ENCODE measurements at regions of chr20 and their contacts with region 1.

Region 1: GRCh38 chr20:63627129-63627750 is 339 bp upstream of the GMEB2 start:
- DNase-seq: peak; percentile 96 to 98
- ATAC-seq: peak; percentile 94
- H3K4me3 ChIP-seq: peak overlapping the region; percentile 16 to 69
- H3K27ac ChIP-seq: peak overlapping the region in 1 of 2 donors; percentile 17
- H3K4me1 ChIP-seq: no peaks in the 10 kb centered on the region
- H3K27me3 ChIP-seq: no peaks in the 10 kb centered on the region

Region 2: GRCh38 chr20:63520504-63520933 is 106.7 kb before region 1 on chr20 and contains the start of gene PPDPF:
- intact Hi-C with region 1: no loop called
- DNase-seq: peak; percentile 87 to 94
- ATAC-seq: peak; percentile 91
- H3K4me3 ChIP-seq: peak within 1 kb of the TSS; percentile 78 to 80
- H3K27ac ChIP-seq: peak within 1 kb of the TSS in 1 of 2 donors; percentile 55
- H3K4me1 ChIP-seq: no peaks in the 10 kb centered on the region
- H3K27me3 ChIP-seq: no peaks in the 10 kb centered on the region
- total RNA-seq, gene PPDPF: 176 to 190 TPM

Region 3: DNA sequence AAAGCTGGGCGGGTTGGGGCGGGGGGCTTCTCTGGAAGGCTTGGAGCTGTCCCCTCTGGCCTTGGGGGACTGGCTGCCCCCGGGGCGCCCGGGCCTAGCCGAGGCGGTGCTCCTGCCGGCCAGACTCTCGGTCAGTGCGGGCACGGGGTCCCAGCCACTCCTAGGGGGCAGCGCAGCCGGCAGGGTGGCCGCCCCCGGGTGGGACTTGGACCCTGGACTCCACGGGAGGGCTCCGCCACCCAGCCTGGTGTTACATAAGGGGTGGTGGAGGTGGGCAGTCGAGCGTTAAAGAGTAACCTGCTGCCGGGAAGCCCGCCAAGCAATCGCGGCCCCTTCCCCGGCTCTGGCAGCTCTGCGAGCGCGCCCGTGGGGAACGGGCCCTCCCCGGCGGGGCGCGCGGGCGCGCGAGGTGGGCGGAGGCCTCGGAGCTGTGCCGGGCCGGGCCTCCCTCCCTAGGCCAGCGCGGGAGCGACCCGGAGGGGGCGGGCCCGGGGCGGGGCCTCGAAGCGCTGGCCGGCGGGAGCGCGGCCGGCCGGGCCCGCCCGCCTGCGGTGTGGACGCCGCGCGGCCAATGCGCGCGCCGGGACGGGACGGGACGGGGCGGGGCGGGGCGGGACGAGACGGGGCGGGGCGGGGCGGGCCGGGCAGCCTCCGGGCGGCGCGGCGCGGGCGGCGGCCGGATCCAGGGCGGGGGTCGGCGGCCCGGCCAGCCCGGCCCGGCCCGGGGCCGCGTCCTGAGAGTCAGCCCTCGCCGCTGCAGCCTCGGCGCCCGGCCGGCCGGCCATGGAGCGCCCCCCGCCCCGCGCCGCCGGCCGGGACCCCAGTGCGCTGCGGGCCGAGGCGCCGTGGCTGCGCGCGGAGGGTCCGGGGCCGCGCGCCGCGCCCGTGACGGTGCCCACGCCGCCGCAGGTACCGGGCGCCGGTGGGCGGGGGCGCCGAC is 112.2 kb after region 1 on chr20 and contains the start of gene SLC2A4RG:
- intact Hi-C with region 1: loop called in 1 of 2 experiments (anchors 2 kb)
- DNase-seq: peak; percentile 87 to 93
- ATAC-seq: peak; percentile 74
- H3K4me3 ChIP-seq: peak within 1 kb of the TSS; percentile 73 to 77
- H3K27ac ChIP-seq: peak within 1 kb of the TSS; percentile 63 to 68
- H3K4me1 ChIP-seq: no peaks in the 10 kb centered on the region
- H3K27me3 ChIP-seq: no peaks in the 10 kb centered on the region
- total RNA-seq, gene SLC2A4RG: 49.9 to 72.4 TPM

Region 4: DNA sequence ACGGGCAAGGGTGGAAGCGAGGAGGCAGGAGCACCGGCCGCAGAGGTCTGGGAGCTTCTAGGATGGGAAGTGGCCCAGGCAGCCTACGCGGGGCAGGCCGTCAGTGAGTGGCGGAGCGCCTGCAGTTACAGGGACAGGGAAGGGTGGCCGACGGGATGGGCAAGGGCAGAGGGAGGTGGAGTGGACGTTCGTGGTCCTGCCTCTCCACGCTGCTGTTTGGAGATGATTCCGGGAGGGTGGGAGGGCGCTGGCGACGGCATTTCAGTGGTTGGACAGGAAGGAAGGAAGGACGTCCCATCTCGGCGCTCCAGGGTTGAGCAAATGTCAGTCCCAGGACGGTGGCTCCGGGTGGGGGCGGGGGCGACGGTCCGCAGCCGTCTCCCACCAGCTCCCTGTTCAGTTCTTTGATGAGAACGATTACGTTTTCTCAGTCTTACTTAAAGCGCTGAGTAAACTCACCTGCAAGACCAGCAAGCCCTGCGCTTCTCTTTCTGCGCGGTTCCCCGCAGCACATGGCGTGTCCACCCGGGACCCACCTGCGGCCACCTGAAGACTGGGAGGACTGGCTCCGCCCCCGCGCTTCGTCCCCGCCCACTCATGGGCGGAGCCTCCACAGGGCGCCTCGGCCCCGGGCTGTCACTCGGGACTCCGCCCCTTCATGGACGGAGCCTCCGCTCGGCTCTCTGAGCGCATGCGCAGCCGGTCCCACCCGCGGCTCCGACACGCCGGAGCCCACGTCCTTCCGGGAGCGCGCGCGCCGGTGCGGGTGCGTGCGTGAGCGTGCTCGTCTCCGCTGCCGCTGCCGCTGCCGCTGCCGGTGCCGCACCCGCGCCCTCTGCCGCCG is 267.3 kb after region 1 on chr20 and contains the start of gene DNAJC5:
- intact Hi-C with region 1: loop called in 1 of 2 experiments (anchors 10 kb)
- DNase-seq: peak; percentile 97 to 98
- ATAC-seq: peak; percentile 97
- H3K4me3 ChIP-seq: peak within 1 kb of the TSS; percentile 91 to 93
- H3K27ac ChIP-seq: no peak within 1 kb of the TSS
- H3K4me1 ChIP-seq: peaks cover 0 to 4% of the 10 kb centered on the region in 2 donors
- H3K27me3 ChIP-seq: no peaks in the 10 kb centered on the region
- total RNA-seq, gene DNAJC5: 34.6 to 38.1 TPM